ENCODE measurements at regions of chr7 and their contacts with region 1.

Region 1: GRCh38 chr7:155344600-155345433 is 47.1 kb downstream of the INSIG1 start:
- DNase-seq: no peak
- H3K4me3 ChIP-seq: peak overlapping the region; percentile 44
- CTCF ChIP-seq: peak; percentile 73

Region 2: DNA sequence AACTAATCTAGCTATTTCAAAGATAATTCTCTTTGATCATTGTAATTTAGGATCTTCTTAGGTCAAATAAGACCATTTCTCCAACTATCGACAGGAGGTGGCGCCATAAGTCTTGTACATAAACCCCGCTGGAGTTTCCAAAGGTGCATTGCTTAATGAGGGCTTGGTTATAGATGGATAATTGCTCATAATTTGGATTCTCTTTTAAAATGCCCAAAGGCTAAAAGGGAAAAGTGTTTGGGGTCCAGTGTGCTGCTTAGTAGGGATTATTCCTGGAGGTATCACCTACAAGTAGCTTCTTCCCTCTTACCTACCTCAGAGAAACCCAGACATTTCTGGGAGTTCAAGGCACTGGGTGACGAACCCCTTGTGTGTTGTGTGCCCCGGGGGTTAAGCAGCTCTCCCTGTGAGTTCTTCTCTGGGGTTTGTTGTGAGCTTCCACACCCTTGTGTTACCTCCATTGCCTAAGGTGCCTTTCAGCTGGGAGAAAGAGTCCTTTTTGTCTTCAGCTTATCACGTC is 417.1 kb before region 1 on chr7:
- CTCF ChIA-PET with region 1: interaction called, 85 read pairs
- POLR2A ChIA-PET with region 1: no interaction called
- DNase-seq: peak; percentile 67
- H3K4me3 ChIP-seq: peak overlapping the region; percentile 57
- CTCF ChIP-seq: peak; percentile 56

Region 3: DNA sequence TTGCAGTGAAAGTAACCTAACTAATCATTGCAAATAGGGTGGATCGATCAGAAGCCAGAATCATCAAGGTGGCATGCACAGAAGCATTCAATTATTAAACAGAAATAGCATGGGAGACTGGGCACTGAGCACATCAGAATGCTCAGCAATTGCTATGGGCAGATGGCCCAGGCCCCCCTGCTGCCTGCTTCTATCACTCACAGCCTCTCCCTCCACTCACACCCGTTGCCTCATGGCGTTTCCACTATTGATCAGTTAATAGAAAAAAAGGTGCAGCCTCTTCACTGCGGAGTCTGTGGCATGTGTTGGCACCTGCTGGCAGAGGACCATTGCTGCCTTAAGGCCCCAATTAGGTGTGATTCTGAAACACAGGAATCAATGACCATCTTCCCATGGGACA is 285.9 kb before region 1 on chr7:
- CTCF ChIA-PET with region 1: no interaction called
- POLR2A ChIA-PET with region 1: no interaction called
- DNase-seq: no peak
- H3K4me3 ChIP-seq: no peak overlapping the region
- CTCF ChIP-seq: no peak

Region 4: DNA sequence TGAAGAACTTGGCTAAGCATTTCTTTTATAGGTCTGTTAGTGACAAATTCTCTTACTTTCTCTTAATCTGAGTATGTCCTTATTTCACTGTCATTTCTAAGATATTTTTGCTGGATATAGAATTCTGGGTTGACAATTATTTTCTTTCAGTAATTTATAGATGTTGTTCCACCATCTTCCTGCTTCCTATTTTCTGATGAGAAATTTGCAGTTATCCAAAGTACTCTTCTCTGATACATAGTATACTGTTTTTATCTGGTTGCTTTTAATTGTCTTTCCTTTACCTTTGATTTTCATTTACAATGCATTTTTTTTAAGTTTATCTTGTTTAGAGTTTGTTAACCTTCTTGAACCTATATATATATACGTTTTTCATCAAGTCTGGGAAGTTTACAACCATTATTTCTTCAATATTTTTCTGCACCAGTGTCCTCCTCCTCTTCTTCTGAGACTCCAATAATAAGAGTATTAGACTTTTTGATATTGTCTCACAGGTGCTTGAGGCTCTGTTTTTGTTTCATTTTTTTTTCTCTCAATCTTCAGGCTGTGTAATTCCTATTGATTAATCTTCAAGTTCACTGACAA is 148.8 kb before region 1 on chr7:
- CTCF ChIA-PET with region 1: interaction called, 122 read pairs
- POLR2A ChIA-PET with region 1: no interaction called
- DNase-seq: no peak
- H3K4me3 ChIP-seq: no peak overlapping the region
- CTCF ChIP-seq: no peak

Region 5: DNA sequence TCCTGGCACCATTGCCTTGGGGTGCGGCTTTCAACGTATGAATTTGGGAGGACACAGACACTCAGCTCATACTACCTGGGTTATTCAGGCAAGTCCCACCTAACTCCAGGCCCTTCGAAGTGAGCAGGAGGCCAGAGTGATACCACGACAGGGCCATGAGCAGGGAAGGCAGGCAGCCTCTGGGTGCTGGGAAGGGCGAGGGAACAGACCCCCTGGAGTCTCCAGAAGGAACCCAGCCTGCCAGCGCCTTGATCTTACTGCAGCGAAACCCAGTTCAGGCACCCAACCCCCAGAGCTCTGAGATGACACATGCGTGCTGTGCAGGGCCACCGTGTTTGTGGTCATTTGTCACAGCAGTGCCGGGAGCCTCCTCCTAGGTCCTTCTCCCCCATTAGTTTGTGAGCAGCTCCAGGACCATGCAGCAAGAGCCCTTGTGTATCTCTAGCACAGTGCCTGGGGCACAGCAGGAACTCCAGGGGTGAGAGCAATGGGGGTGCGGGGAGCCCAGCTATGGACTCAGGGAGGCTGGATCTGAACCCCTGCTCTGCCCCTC is 54.8 kb before region 1 on chr7:
- CTCF ChIA-PET with region 1: no interaction called
- POLR2A ChIA-PET with region 1: no interaction called
- DNase-seq: no peak
- H3K4me3 ChIP-seq: no peak overlapping the region
- CTCF ChIP-seq: no peak

Region 6: DNA sequence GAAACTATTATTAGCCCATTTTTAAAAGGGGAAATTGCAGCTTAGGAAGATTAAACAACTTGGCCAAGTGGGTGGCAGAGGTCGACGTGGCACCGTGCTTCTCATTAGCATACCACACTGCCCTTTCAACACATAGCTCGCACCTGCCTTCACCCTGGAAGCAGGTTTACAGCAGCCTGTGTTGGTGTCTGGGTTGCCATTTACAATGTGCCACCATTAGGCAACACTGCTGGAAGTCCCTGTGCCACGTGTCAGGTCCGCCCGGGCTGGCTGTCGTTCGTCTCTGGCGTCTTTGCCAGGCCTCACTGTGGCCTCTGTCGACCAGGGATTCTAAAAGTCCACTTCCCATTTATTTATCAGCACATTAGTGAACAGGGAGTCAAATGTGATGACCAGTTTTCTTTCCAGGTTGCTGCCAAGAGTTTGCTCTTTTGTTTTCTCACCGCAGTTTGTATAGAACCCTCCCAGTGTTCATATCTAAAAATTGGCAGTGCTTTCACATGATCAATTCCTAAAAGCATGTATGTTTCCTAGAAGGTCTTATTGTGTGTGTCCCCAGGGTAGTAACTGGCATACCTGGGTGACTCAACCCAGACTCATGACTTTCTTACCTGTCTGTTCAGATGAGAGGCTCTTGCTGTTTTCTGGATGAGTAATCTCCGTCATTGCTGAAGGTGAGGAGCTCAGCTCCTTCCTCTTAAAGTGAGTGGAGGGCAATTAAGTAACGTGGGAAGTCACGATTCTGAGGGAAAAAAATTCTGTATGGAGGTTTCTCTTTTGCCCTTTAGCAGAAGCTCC is 37.9 kb before region 1 on chr7:
- CTCF ChIA-PET with region 1: interaction called, 17 read pairs
- POLR2A ChIA-PET with region 1: no interaction called
- DNase-seq: no peak
- H3K4me3 ChIP-seq: no peak overlapping the region
- CTCF ChIP-seq: no peak

Region 7: GRCh38 chr7:155323001-155323638 is 21.7 kb before region 1 on chr7:
- CTCF ChIA-PET with region 1: interaction called, 22 read pairs
- POLR2A ChIA-PET with region 1: no interaction called
- DNase-seq: no peak
- H3K4me3 ChIP-seq: no peak overlapping the region
- CTCF ChIP-seq: no peak

Region 8: DNA sequence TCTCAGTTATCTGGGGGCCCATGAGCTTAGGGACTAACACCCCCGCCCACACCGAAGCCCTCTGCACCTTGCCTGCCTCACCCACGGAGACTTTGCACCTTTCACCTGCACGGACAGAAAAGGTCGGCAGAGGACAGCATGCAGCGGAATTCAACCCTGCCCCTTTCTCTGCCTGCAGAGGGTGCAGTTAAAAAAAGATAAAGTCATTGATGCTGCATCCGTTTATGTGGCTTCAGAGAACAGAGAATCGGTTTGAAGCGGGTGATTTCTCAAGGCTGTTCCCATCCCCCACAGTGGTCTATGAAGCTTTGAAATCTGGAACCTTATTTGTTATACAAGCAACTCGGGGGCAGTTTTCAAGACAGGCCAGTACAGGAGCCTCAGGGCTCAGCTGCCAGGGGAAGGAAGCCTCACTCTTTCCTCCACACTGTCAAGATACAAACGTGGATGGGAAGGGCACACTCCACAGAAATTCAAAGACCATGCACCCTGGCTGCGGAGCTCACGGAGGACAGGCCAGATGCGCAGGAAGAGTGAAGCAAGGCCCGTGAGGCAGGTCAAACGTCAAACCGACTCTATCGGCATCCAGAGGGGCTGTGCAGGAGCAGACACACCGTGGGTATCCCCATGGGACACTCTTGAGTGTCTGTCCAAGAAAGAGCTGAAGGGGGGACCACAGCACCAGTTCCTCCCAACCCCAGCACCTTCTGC is 19.2 kb after region 1 on chr7:
- CTCF ChIA-PET with region 1: interaction called, 10 read pairs
- POLR2A ChIA-PET with region 1: no interaction called
- DNase-seq: no peak
- H3K4me3 ChIP-seq: no peak overlapping the region
- CTCF ChIP-seq: no peak

Region 9: DNA sequence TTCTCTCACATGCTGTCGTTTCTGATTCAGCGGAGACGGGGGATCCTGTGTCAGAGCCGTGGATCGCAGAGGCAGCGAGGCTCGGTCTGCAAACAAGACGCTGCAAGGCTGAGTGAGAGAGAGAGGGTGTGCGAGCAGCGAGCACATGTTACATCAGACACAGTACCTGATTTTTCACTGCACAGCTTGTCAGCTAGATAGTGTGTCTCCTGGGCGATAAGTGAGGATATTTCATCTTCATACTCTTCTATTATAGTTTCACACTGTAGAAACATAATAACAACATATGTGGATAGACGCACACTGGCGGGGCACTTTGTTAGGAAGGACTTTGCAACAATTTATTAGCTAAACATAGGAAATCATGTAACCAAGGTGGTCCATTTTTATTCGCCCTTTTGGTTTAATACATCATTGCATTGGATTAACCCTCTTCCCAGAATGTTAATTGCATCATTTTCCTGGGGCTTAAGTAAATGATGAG is 162.1 kb after region 1 on chr7:
- CTCF ChIA-PET with region 1: no interaction called
- POLR2A ChIA-PET with region 1: no interaction called
- DNase-seq: no peak
- H3K4me3 ChIP-seq: no peak overlapping the region
- CTCF ChIP-seq: no peak

Measured in AG04449 (cell line).